ENCODE measurements at regions of chr2 and their contacts with region 1.

Region 1: GRCh38 chr2:227890495-227891079 is 19.2 kb downstream of the DAW1 start:
- DNase-seq: peak in 1 of 35 experiments; percentile 58
- ATAC-seq: no peak
- H3K4me3 ChIP-seq: no peak overlapping the region
- H3K4me3 Mint-ChIP-seq: no peak overlapping the region
- H3K27ac ChIP-seq: no peak overlapping the region
- H3K27ac Mint-ChIP-seq: no peak overlapping the region
- H3K4me1 ChIP-seq: no peaks in the 10 kb centered on the region
- H3K4me1 Mint-ChIP-seq: no peaks in the 10 kb centered on the region
- H3K27me3 ChIP-seq: no peaks in the 10 kb centered on the region
- H3K27me3 Mint-ChIP-seq: peaks cover 2 to 5% of the 10 kb centered on the region in 2 donors

Region 2: GRCh38 chr2:229273723-229274338 is 1383.2 kb after region 1 on chr2:
- CTCF ChIA-PET with region 1: interaction called, 3 to 10 read pairs
- POLR2A ChIA-PET with region 1: interaction called in 1 of 2 experiments, 4 read pairs
- DNase-seq: peak in 1 of 35 experiments; percentile 9
- ATAC-seq: no peak
- H3K4me3 ChIP-seq: no peak overlapping the region
- H3K4me3 Mint-ChIP-seq: no peak overlapping the region
- H3K27ac ChIP-seq: no peak overlapping the region
- H3K27ac Mint-ChIP-seq: no peak overlapping the region
- H3K4me1 ChIP-seq: no peaks in the 10 kb centered on the region
- H3K4me1 Mint-ChIP-seq: no peaks in the 10 kb centered on the region
- H3K27me3 ChIP-seq: peaks cover 13 to 29% of the 10 kb centered on the region in 2 experiments
- H3K27me3 Mint-ChIP-seq: peaks cover 24 to 26% of the 10 kb centered on the region in 2 donors